A549 (cell line): ENCODE measurements at regions of chr17 and their contacts with region 1.

Region 1: DNA sequence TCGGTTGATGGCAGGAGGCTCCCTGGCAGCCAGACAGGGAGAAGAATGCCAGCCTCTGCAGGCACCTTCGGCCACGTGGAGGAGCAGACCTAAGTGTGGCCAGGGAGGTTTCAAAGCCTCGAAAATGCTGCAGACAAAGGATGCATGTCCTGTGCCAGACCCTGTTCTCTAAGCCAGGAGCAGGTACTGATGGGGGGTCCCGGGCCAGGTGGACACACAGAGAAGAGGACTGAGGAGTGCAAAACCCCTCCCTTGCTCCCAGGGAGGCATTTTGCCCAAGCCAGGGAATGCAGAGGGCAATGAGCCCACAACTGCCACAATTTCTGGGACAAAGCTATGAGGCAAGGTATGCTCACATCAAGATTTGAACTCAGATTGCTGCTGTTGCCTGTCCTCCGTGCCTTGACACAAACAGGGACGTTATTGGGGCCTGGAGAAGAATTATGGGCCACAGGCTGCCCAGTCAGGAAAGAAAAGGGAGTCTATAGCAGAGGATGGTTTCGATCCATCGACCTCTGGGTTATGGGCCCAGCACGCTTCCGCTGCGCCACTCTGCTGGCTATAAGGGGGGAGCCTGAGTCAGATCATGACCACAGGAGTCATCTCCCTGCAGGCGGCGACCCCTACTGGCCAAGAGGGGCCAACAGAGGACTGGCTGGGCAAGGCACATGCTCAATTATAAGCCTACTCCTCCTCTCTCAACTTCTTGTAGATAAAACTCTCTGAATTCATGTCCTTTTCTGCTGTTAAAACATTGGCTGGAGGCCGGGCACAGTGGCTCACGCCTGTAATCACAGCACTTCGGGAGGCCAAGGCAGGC is 25.1 kb upstream of the FOXK2 start:
- DNase-seq: peak; percentile 98 to 100
- ATAC-seq: peak; percentile 81 to 91
- H3K4me3 ChIP-seq: peak overlapping the region; percentile 26; the same call in 1 of the 3 replicates
- H3K27ac ChIP-seq: peak overlapping the region in 1 of 2 experiments; percentile 72; a peak in 3 of 6 replicates
- H3K4me1 ChIP-seq: peaks cover 33% of the 10 kb centered on the region
- CTCF ChIP-seq: peak; percentile 98
- EP300 ChIP-seq: no peak
- POLR2A ChIP-seq: no peak
- RAD21 ChIP-seq: peak in 1 of 2 experiments; percentile 40; a peak in 4 of 5 replicates

Region 2: DNA sequence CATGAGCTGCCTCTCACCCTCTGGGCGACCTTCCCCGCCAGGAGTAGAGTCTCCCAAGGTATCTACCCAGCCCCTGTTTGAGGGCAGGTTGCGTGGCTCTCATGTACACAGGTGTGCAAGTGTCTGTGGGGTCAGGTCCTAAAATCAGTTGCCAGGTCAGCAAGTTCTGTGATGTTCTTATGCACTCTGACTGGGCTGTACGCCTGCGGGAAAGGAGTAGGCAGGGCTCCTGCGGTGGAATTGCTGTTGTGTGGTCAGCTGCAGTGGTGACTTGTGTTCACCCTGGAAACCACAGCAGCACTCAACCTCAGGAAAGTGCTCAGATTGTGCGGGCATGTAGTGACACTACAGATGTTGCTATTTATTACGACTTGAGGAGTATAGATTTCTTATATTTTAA is 16.5 kb before region 1 on chr17:
- CTCF ChIA-PET with region 1: interaction called, 31 read pairs
- POLR2A ChIA-PET with region 1: no interaction called
- DNase-seq: no peak
- ATAC-seq: no peak
- H3K4me3 ChIP-seq: no peak overlapping the region
- H3K27ac ChIP-seq: no peak overlapping the region
- H3K4me1 ChIP-seq: no peaks in the 10 kb centered on the region
- CTCF ChIP-seq: no peak
- EP300 ChIP-seq: no peak
- POLR2A ChIP-seq: no peak
- RAD21 ChIP-seq: no peak

Region 3: GRCh38 chr17:82507631-82508175 is 13.3 kb after region 1 on chr17:
- CTCF ChIA-PET with region 1: interaction called, 23 read pairs
- POLR2A ChIA-PET with region 1: no interaction called
- DNase-seq: no peak
- ATAC-seq: no peak; a peak in 1 of 6 replicates
- H3K4me3 ChIP-seq: no peak overlapping the region
- H3K27ac ChIP-seq: no peak overlapping the region
- H3K4me1 ChIP-seq: no peaks in the 10 kb centered on the region
- CTCF ChIP-seq: no peak
- EP300 ChIP-seq: no peak
- POLR2A ChIP-seq: no peak
- RAD21 ChIP-seq: no peak

Region 4: GRCh38 chr17:82528484-82529265 is 34.2 kb after region 1 on chr17:
- CTCF ChIA-PET with region 1: interaction called, 19 read pairs
- POLR2A ChIA-PET with region 1: no interaction called
- DNase-seq: peak; percentile 82 to 85
- ATAC-seq: peak; percentile 96 to 100
- H3K4me3 ChIP-seq: no peak overlapping the region
- H3K27ac ChIP-seq: no peak overlapping the region
- H3K4me1 ChIP-seq: peaks cover 51% of the 10 kb centered on the region
- CTCF ChIP-seq: peak; percentile 66
- EP300 ChIP-seq: no peak
- POLR2A ChIP-seq: no peak
- RAD21 ChIP-seq: peak; percentile 59 to 76

Region 5: GRCh38 chr17:82536512-82537201 is 42.2 kb after region 1 on chr17:
- CTCF ChIA-PET with region 1: interaction called, 16 read pairs
- POLR2A ChIA-PET with region 1: no interaction called
- DNase-seq: no peak
- ATAC-seq: peak; percentile 21 to 48; a peak in 3 of 6 replicates
- H3K4me3 ChIP-seq: no peak overlapping the region
- H3K27ac ChIP-seq: peak overlapping the region; percentile 0 to 61; a peak in 4 of 6 replicates
- H3K4me1 ChIP-seq: peaks cover 41% of the 10 kb centered on the region
- CTCF ChIP-seq: no peak
- EP300 ChIP-seq: no peak
- POLR2A ChIP-seq: no peak
- RAD21 ChIP-seq: no peak

Region 6: DNA sequence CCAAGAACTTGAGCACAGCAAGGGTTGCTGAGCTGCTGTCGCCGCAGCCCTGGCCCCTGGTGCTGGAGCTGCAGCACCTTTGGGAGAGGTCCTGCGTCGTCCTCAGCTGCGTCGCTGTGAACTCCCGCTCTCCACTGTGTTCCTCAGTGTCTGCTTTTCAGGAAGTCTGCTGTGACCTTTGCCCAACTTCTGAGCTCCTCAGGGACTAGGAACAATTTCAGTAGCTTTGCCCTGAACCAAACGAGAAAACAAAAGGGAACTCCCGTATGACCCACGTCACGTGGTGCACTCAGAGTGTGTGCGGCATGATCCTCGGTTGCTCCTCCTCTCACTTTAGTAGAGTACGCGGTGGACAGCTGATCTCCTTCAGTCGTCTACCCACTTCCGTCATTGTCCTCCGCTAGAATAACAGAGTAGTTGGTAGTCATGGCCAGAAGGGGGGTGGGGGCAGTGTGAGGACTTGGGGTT is 109.6 kb after region 1 on chr17:
- CTCF ChIA-PET with region 1: no interaction called
- POLR2A ChIA-PET with region 1: no interaction called
- DNase-seq: no peak
- ATAC-seq: no peak
- H3K4me3 ChIP-seq: no peak overlapping the region
- H3K27ac ChIP-seq: no peak overlapping the region
- H3K4me1 ChIP-seq: no peaks in the 10 kb centered on the region
- CTCF ChIP-seq: no peak
- EP300 ChIP-seq: no peak
- POLR2A ChIP-seq: no peak
- RAD21 ChIP-seq: no peak

Region 7: DNA sequence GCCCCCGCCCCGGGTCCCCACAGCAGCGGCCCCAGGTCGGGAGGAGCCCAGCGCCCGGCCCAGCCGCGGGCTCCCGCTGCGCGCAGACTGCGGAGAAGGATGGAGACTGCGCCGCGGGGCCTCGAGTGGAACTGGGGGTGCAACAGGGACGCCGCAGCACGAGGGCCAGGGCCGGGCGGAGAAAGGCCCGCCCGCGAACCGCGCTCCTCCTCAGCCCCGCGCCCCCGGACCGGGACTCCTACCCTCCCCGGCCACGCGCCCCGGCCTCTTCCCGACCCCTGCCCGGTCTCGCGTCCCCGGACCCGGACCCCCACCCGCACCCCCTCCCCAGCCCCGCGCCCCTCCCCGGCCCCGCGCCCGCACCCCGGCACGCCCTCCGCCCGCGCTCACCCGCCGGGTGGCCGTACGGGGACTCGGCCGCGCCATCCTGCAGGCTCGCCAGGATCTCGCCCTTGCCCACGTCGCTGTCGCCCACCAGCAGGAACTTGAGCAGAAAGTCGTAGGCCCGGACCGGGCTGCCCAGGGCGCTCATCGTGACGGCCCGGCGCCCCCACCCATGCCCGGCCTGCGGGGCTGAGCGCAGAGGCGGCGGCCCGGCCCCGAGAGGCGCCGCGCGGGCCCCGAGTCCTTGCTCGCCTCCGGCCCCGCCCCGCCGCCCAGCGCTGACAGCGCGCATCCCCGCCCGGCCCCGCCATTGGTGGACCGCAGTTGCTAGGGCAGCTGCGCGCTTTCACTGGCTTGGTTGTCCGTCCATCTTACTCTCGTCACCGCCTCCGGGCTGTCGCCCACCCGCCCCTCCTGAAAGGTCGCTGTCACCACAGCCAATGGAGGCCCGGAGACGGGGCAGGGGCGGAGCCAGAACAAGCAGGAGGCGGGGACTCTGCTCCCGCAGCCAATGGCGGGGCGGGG is 203.9 kb after region 1 on chr17 and contains the start of gene RAB40B:
- CTCF ChIA-PET with region 1: no interaction called
- POLR2A ChIA-PET with region 1: no interaction called
- DNase-seq: peak; percentile 99 to 100
- ATAC-seq: peak; percentile 95 to 97
- H3K4me3 ChIP-seq: peak within 1 kb of the TSS; percentile 60
- H3K27ac ChIP-seq: peak within 1 kb of the TSS; percentile 47 to 83
- H3K4me1 ChIP-seq: peaks cover 25% of the 10 kb centered on the region
- CTCF ChIP-seq: no peak
- EP300 ChIP-seq: no peak
- POLR2A ChIP-seq: no peak
- RAD21 ChIP-seq: no peak
- polyA plus RNA-seq, gene RAB40B: 5.6 and 5.8 TPM in 2 replicates